ENCODE measurements at regions of chr10 and their contacts with region 1.

Region 1: DNA sequence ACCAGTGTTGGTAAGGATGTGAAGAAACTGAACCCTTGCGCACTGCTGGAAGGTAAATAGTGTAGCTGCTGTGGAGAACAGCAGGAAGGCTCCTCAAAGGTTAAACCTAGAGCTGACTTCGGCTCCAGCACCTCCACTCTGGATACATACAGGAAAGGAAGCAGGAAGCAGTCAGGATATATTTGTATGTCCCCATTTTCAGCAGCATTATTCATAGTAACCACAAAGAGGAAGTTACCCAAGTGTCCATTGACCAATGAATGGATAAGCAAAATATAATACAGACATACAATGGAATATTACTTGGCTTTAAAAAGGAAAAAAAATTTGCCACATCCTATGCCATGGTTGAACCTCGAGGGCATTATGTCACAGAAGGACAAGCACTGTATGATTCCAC is 15.0 kb downstream of the RET start:
- H3K4me3 Mint-ChIP-seq: no peak overlapping the region
- H3K27ac Mint-ChIP-seq: no peak overlapping the region
- H3K4me1 Mint-ChIP-seq: peaks cover 24% of the 10 kb centered on the region
- H3K27me3 Mint-ChIP-seq: peaks cover 50% of the 10 kb centered on the region

Region 2: GRCh38 chr10:43105102-43105785 is 13.4 kb after region 1 on chr10:
- intact Hi-C with region 1: loop called (anchors 1 kb)
- H3K4me3 Mint-ChIP-seq: peak overlapping the region; percentile 75
- H3K27ac Mint-ChIP-seq: peak overlapping the region; percentile 75
- H3K4me1 Mint-ChIP-seq: peaks cover 46% of the 10 kb centered on the region
- H3K27me3 Mint-ChIP-seq: peaks cover 35% of the 10 kb centered on the region